PC-9 (cell line): ENCODE measurements at regions of chr10 and their contacts with region 1.

Region 1: DNA sequence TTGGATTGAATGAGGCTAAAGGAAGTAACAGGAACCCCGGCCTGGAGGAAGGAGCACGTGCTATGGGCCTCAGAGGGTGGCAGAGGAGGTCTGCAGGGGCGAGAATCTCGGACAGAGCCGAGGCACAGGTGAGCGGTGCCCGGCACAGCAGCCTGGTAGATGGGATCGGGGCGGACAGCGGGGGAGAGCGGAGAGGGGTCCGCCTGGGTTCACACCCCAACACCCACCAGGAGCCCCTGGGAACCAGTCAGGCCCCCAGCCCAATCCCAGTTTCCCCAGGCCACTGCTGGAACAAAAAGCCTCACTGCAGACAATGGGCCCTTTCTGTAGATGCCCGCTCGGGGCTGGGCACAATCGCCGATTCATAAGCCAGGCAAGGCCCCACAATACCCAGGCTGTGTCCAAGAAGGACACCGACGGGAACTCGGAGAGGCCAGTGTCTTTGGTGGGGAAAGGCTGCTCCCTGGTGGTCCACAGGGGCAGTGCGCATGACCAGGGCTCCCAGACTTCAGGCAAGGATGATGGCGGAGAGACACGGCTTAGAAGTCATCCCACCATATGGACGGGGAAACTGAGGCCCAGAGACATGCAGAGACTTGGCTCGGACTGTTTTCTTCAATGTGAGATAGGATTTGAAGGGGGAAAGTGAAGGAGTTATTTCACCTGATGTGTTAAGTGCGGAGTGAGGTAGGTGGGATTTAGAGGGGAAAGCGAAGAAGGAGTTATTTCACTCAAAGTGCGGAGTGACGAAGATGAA is 106.9 kb upstream of the GPR26 start:
- DNase-seq: peak; percentile 36 to 41
- H3K4me3 ChIP-seq: no peak overlapping the region
- H3K27ac ChIP-seq: no peak overlapping the region
- H3K4me1 ChIP-seq: no peaks in the 10 kb centered on the region
- H3K27me3 ChIP-seq: peaks cover 23% of the 10 kb centered on the region; the same call in 1 of the 2 replicates
- CTCF ChIP-seq: peak; percentile 90

Region 2: DNA sequence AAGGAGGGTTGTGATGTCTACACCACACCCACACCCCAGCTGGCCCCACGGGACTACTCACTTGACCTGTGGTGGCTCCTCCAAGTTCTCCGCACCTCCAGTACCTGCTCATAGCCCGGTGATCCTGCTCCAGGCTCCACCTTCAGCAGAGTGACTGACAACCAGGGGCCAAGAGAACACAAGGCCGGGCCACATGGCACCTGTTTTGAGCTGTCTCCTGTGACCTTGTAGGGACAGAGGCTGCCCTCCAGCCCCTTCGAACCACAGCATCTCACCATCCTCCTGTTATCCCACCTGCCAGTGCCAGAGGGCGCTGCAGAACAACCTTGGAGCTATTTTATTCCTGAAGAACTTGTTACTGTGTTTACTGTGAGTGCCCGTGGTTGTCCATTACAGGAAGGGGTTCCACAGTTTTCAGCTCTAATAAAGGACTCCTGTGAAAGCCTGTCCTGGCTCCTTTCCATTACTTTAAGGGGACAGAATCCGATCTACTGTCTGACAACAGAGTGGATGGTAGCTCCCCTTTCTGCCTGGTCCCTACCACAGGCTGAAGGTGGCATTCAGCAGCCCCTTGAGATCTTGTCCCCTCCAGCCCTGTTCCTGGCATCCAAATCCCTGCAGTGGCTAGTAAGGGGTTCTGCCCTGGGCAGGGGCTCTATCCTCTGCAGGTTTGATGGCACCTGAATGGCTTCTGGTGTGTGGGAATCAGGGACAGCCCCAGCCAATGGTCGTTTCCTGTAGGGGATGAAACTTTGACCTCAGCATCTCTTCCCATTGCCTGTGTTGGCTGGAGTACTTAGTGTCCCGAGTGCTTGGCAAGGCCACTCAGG is 910.4 kb before region 1 on chr10:
- CTCF ChIA-PET with region 1: no interaction called
- POLR2A ChIA-PET with region 1: no interaction called
- intact Hi-C with region 1: loop called (anchors 5 kb)
- DNase-seq: peak in 1 of 2 experiments; percentile 37
- H3K4me3 ChIP-seq: no peak overlapping the region
- H3K27ac ChIP-seq: no peak overlapping the region
- H3K4me1 ChIP-seq: no peaks in the 10 kb centered on the region
- H3K27me3 ChIP-seq: peaks cover 16% of the 10 kb centered on the region; the same call in 1 of the 2 replicates
- CTCF ChIP-seq: peak; percentile 66

Region 3: DNA sequence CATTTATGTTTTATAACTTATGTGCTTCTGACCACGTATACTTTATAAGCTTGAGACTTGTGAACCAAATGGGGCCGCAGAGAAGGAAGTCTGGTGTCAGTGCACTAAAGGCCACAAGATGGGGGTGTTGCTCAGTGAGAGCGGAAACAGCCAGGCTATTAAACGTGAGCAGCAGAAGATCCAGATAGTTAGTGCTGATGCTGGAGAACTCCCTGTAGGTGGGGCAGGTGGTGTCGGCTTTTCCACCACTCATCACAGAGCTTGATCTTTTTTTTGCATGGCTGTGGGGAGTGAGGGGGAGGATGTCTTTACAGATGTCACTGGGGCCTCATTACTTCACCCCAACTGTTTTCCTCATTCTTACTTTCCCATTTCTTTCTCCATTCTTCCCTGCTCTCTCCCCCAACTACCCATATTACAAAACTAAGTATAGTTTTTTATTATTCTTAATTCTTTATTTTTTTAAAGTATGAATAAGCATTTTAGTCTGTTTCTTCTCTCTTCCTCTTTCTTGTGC is 515.8 kb before region 1 on chr10:
- CTCF ChIA-PET with region 1: no interaction called
- POLR2A ChIA-PET with region 1: no interaction called
- intact Hi-C with region 1: loop called (anchors 1 kb)
- DNase-seq: peak in 1 of 2 experiments; percentile 18
- H3K4me3 ChIP-seq: no peak overlapping the region
- H3K27ac ChIP-seq: no peak overlapping the region
- H3K4me1 ChIP-seq: no peaks in the 10 kb centered on the region
- H3K27me3 ChIP-seq: no peaks in the 10 kb centered on the region
- CTCF ChIP-seq: peak; percentile 84

Region 4: DNA sequence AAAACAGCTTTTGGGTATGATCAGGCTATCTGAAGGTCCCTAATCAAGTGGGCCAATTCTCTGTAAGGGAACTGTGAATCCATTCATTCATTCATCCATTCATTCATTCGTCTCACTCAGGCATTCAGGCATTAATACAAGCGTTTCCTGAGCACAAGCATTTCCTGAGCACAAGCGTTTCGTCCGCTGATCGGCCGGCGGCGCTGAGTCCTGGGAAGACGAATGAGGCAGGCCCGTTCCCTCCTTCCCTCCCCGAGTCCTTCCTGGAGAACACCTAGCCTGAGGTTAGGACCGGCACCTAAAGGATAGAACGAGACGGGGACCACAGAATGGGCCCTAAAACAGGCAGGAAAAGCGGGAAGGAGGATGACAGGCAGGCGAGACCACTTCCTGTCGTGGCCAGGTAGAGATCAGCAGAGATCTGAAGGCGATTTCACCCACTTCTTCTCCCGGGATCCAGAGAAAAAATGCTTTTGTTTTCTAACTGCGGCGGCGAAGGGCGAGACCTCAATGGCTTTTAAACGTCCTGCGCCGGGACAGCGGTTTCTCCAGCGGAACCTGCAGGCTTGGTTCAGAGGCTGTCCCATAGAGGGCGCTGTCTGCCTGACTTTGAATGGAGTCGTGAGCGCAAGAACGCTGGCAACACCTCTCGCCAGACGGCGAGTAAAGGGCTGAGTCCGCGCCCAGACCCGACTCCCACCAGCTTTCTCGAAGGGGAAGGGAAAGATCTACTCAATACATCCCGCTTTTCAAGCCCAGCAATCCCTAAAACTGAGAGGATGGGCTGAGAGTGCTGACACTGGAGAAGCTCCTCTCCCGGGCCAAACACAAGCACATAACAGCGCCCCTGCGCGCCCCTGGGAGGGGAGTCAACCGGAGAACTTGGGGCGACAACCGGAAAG is 426.4 kb before region 1 on chr10:
- CTCF ChIA-PET with region 1: no interaction called
- POLR2A ChIA-PET with region 1: no interaction called
- intact Hi-C with region 1: loop called (anchors 2 kb)
- DNase-seq: peak in 1 of 2 experiments; percentile 65
- H3K4me3 ChIP-seq: no peak overlapping the region
- H3K27ac ChIP-seq: no peak overlapping the region
- H3K4me1 ChIP-seq: peaks cover 14% of the 10 kb centered on the region
- H3K27me3 ChIP-seq: no peaks in the 10 kb centered on the region
- CTCF ChIP-seq: peak; percentile 60

Region 5: GRCh38 chr10:123548770-123549169 is 10.5 kb before region 1 on chr10:
- CTCF ChIA-PET with region 1: no interaction called
- POLR2A ChIA-PET with region 1: no interaction called
- intact Hi-C with region 1: no loop called
- DNase-seq: no peak
- H3K4me3 ChIP-seq: no peak overlapping the region
- H3K27ac ChIP-seq: no peak overlapping the region
- H3K4me1 ChIP-seq: no peaks in the 10 kb centered on the region
- H3K27me3 ChIP-seq: peaks cover 20% of the 10 kb centered on the region
- CTCF ChIP-seq: no peak

Region 6: GRCh38 chr10:124354411-124355382 is 795.5 kb after region 1 on chr10:
- CTCF ChIA-PET with region 1: no interaction called
- POLR2A ChIA-PET with region 1: no interaction called
- intact Hi-C with region 1: no loop called
- DNase-seq: peak in 1 of 2 experiments; percentile 35
- H3K4me3 ChIP-seq: peak overlapping the region; percentile 55; the same call in 1 of the 2 replicates
- H3K27ac ChIP-seq: no peak overlapping the region
- H3K4me1 ChIP-seq: peaks cover 5% of the 10 kb centered on the region; the same call in 1 of the 2 replicates
- H3K27me3 ChIP-seq: no peaks in the 10 kb centered on the region
- CTCF ChIP-seq: no peak